ENCODE measurements at regions of chr7 and their contacts with region 1.

Region 1: DNA sequence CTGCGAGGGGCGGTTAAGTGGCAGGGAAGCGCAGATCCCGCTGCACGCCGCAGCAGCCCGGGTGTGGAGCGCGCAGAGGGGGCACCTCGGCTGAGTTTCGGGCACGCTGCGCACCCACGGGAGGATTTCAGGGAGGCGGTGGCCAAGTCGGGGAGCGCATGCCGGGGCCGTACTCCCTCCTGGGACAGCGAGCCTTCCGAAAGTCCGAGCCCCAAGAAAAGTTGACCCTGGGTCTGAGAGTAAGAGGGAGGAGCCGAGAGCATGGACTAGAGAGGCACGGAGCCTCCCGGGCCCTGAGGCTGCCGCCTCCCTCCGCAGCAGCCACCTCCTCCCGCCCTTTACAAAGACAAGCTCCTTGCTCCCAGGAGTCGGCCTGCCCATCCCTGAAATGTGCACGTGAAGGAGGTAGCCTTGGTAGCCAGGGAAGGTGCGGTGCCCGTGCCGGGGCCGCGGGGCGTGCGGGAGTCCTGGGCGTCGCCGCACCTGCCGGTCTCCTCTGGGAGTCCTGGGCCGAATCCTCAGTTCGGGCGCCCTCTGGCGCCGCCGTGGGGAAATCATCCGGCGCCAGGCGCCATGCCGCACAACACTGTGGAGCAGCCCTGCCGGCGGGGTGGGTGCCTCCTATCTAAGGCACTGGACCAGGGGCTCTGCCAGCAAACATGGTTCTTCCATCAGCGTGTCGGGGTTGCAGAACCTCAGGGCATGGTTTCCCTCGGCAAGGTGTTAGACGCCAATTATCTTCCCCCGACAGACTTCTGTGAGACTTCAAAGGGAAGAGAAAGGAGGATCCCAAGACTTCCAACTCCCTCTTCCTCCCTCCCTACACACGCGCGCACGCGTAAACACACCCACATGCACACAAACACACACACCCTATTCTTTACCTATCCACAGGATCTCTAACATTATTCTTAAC is 104.0 kb downstream of the TRIL start:
- DNase-seq: no peak
- H3K4me3 ChIP-seq: peak overlapping the region; percentile 34 to 67 (median 56)
- H3K27ac ChIP-seq: peak overlapping the region in 2 of 4 donors; percentile 4 to 42
- H3K4me1 ChIP-seq: peaks cover 0 to 29% (median 9%) of the 10 kb centered on the region in 3 donors
- H3K27me3 ChIP-seq: peaks cover 0 to 33% (median 6%) of the 10 kb centered on the region in 4 donors
- CTCF ChIP-seq: peak; percentile 68 to 90 (median 84)
- POLR2A ChIP-seq: no peak

Region 2: DNA sequence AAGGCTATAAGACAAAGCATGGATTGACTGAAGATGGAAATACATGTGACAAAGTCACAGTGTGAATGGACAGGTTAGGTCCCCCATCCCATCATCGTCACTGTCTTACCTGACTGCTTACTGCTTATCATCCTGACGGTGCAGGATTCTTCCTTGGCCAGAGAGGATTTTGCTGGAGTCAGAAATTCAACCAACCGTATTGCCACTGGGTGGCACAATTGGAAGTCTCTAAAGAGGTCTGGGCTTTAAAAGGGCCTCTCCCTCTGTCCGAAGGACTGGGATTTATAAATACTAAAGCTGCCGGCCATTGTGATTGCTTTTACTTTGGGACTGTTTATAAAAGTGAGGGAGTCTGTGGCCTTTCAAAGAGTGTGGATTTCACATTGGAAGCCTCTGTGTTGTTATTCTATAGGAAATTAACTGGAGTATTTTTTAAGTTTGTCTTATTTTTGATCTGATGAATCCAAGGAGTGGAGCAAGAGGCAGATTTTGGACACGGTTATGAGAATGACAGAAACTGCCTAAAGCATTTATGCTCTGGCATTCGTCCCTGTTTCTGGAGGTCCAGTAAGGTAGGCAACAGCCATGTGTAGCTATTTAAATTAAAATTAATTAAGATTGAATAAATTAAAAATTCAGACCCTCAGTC is 555.1 kb before region 1 on chr7:
- intact Hi-C with region 1: loop called (anchors 10 kb)
- DNase-seq: no peak
- H3K4me3 ChIP-seq: no peak overlapping the region
- H3K27ac ChIP-seq: no peak overlapping the region
- H3K4me1 ChIP-seq: peaks cover 0 to 26% (median 0%) of the 10 kb centered on the region in 3 donors
- H3K27me3 ChIP-seq: no peaks in the 10 kb centered on the region
- CTCF ChIP-seq: peak in 5 of 6 experiments; percentile 35 to 60 (median 47)
- POLR2A ChIP-seq: no peak

Region 3: DNA sequence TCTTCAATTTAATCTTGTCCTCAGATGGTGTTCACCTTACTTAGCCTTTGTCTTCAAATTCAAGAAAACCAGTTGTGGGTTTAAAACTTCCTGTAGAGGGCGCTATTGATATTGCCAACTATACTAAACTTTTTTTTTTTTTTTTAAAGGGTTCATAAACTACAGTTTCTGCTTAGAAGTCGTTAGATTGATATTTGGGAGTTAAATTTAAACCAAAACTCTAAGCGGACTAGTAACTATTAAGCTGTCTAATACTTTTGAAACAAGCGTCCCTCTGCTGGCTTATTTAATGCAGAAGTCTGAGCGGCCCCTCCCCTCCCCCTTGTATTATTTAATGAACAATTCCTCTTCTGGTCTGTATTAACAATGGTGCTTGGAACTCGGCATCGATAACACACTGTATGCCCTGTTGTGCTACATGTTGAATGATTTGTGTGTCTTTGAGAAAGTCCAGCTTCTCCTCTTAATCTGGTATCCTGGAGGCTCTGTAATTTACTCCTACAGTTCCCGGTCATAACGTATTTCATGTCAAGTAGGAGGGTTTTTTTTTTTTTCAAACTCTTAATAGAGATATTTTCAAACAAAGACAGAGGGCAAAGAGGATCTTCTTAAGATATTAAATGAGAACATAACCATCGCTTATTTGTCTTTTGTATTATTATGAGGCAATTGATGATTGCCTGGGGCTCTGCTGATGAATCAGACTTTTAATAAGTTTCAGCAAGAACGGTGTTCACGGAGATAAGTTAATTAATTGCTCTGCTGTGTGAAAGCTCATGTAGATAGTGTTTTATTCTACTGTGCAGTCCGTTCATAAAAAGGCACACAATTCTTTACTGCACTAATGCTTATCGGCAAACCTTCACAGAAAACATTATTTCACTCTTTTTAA is 464.3 kb before region 1 on chr7:
- intact Hi-C with region 1: loop called (anchors 10 kb)
- DNase-seq: no peak
- H3K4me3 ChIP-seq: peak overlapping the region in 3 of 4 donors; percentile 28 to 46 (median 30)
- H3K27ac ChIP-seq: peak overlapping the region in 2 of 4 donors; percentile 31 to 39
- H3K4me1 ChIP-seq: peaks cover 0 to 12% (median 2%) of the 10 kb centered on the region in 3 donors
- H3K27me3 ChIP-seq: no peaks in the 10 kb centered on the region
- CTCF ChIP-seq: peak; percentile 47 to 83 (median 69)
- POLR2A ChIP-seq: no peak

Region 4: DNA sequence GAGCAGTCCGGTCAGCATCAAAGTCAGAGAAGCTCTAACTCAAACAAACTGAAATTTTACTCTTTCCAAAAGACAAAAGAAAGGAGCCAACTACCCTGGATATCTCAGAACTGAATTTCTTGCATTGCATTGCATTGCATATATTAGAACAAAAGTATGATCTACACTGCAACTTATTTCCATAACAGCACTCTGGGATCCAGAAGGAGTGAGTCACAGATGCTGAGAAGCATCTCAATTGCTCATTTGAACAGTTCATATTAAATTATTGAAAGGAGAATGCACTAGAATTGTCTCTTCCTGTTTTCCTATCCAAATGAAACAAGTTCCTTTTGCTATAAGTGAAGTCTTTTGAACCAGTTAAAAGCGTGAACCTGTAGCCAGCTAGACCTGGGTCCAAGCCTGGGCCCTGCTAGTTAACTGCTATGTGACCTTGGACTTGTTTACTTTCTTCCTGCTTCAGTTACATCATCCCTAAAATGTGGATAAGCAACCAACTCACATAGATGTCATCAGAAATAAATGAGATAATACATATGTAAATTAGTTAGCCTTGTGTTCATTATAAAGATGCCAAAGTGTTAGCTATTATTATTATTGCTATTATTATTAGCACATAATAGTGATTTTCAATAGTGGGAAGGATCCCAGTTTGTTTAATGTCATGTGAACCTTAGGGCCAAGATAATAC is 257.7 kb before region 1 on chr7:
- intact Hi-C with region 1: no loop called
- DNase-seq: no peak
- H3K4me3 ChIP-seq: no peak overlapping the region
- H3K27ac ChIP-seq: no peak overlapping the region
- H3K4me1 ChIP-seq: no peaks in the 10 kb centered on the region
- H3K27me3 ChIP-seq: no peaks in the 10 kb centered on the region
- CTCF ChIP-seq: no peak
- POLR2A ChIP-seq: no peak

Region 5: DNA sequence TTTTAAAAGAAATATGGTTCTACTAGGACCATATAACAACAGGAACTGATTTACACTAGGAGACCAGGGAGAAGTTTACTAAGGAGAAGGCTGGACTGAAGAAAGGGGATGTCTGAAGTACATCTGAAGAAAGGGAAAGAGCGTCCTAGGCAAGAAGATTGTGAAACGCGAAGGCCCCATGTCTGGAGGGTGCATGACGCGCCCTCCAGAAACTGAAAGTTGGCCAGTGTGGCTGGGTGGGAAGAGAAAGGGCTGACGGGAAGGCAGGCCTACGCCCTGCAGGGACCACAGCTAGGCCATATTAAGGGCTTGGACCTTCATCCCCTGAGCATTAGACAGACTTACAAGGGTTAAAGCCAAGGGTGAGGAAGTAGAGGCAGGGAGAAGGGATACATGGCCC is 53.9 kb before region 1 on chr7:
- intact Hi-C with region 1: no loop called
- DNase-seq: no peak
- H3K4me3 ChIP-seq: no peak overlapping the region
- H3K27ac ChIP-seq: no peak overlapping the region
- H3K4me1 ChIP-seq: no peaks in the 10 kb centered on the region
- H3K27me3 ChIP-seq: no peaks in the 10 kb centered on the region
- CTCF ChIP-seq: no peak
- POLR2A ChIP-seq: no peak

Measured in esophagus squamous epithelium (tissue), 5 donors.